B cell (primary cell): ENCODE measurements at regions of chr16 and their contacts with region 1.

Region 1: GRCh38 chr16:75099756-75100602 is 16.6 kb downstream of the LDHD start:
- DNase-seq: no peak
- ATAC-seq: no peak
- H3K4me3 ChIP-seq: no peak overlapping the region
- H3K4me3 Mint-ChIP-seq: no peak overlapping the region
- H3K27ac ChIP-seq: no peak overlapping the region
- H3K27ac Mint-ChIP-seq: no peak overlapping the region
- H3K4me1 ChIP-seq: peaks cover 8 to 21% of the 10 kb centered on the region in 2 donors
- H3K4me1 Mint-ChIP-seq: peaks cover 15% of the 10 kb centered on the region
- H3K27me3 ChIP-seq: peaks cover 0 to 36% (median 6%) of the 10 kb centered on the region in 4 experiments
- H3K27me3 Mint-ChIP-seq: peaks cover 33% of the 10 kb centered on the region
- CTCF ChIP-seq: no peak

Region 2: DNA sequence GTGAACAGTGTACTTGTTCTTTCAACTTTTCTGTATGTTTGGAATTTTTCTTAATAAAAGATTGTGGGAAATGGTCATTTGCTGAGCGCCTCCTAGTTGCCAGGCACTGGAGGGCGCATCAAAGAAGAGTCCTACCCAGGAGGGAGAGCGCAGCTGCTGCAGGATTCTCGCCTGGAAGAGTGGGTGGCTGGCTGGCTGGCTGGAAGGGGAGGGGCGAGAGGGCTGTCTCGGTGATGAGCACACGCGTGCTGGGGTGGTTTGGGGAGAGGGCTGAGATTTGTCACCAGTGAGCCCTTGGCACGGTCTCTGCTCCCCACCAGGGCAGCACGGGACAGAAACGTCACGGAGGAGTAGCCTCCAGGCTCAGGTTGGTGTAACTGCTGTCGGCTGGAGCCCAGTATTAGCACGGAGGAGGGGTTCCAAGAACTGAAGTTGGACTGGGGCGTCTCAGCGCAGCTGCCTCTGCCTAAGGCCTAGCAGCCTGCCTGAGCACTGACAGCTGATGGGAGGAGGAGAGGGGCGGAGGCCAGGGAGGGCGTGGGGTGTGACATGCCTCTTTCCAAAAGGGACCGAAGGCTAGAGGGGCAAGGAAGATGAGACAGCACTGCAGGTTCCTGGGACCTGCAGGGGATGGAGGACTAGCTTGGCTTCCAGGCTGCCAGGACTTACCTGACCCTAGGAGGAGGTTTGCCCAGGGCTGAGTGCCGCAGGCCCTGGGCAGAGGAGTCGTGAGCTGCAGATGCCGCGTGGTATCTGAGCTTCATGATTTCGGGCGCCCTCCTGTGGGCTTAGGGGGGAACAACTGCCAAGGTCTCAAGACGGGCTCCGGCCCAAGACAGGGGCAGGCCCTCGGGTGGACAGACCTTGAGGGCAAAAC is 10.9 kb after region 1 on chr16:
- CTCF ChIA-PET with region 1: interaction called, 15 read pairs
- POLR2A ChIA-PET with region 1: no interaction called
- intact Hi-C with region 1: no loop called
- DNase-seq: peak; percentile 87
- ATAC-seq: peak; percentile 85
- H3K4me3 ChIP-seq: peak overlapping the region in 2 of 5 experiments; percentile 4 to 22
- H3K4me3 Mint-ChIP-seq: peak overlapping the region; percentile 73
- H3K27ac ChIP-seq: no peak overlapping the region
- H3K27ac Mint-ChIP-seq: peak overlapping the region; percentile 2
- H3K4me1 ChIP-seq: peaks cover 34 to 38% of the 10 kb centered on the region in 2 donors
- H3K4me1 Mint-ChIP-seq: peaks cover 33% of the 10 kb centered on the region
- H3K27me3 ChIP-seq: peaks cover 0 to 79% (median 34%) of the 10 kb centered on the region in 4 experiments
- H3K27me3 Mint-ChIP-seq: peaks cover 50% of the 10 kb centered on the region
- CTCF ChIP-seq: peak; percentile 88